Mucosa of descending colon (tissue), 3 donors: ENCODE measurements at regions of chr2 and their contacts with region 1.

Region 1: DNA sequence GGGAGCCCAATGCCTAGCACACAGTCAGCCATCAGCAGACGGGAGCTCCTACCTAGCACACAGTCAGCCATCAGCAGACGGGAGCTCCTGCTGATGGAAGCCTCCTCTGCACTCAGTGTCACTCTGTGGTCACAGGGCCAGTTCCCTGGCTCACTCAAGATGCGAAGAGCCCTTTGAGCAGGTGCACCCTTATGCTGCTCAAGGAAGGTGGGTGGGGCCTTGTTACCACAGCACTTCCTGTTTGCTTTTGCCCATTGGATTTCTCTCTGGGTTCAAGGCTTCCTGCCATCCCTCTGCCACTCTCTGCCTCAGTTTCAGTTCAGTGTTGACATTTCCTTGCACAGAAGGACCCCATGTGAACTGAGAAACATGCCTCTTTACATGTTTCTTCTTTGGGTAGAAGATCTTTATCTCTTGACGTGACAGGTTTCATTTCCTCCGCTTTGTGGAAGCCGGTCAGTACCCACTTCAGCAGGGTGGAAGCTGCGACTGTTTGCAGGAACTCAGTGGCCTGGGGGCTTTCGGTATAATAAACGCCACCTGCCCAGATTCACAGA is 11.6 kb downstream of the TRIB2 start:
- DNase-seq: peak; percentile 28 to 61 (median 34)
- ATAC-seq: peak; percentile 72
- H3K4me3 ChIP-seq: no peak overlapping the region
- H3K4me1 ChIP-seq: peaks cover 14% of the 10 kb centered on the region
- CTCF ChIP-seq: no peak

Region 2: DNA sequence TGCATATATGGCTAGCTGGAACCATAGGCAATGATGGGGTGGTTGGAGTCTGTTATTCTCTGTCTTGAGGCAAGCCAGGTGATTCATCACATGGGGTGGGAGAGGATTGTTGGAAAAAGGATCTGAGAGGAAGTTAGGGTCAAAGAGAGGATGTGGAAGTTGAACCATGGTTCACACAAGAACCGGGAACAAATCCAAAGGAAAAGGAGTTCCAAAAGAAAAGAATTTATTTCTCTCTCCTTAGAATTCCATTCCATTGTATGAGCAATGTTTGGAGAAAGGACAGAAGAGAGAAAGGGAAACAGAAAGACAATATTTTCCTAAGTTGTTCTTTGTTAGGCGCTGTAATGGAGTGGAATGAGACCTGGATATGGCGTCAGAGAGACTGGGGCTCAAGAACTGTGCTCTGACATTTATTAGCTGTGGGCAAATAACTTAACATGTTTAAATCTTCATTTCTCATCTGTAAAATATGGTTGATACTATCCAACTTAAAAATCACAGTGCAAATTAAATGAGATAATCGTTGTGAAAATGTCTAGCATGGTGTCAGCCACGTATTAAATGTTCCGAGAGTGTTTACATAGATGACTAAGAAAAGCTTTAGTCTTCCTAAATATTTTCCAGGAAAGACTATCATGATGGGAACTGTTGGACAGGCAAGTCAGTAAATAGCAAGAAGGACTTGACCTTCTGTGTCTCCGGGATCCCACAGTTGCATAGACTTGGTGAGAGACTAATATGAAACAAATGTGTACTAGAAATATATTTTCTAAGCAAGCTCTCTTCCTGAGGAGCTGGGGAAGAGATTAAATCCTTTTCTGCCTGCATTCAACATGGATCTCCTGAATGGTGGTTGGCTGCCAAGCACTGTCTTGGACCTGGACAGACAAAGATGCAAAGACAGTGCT is 59.8 kb after region 1 on chr2:
- intact Hi-C with region 1: no loop called
- DNase-seq: no peak
- ATAC-seq: no peak
- H3K4me3 ChIP-seq: no peak overlapping the region
- H3K4me1 ChIP-seq: no peaks in the 10 kb centered on the region
- CTCF ChIP-seq: no peak

Region 3: DNA sequence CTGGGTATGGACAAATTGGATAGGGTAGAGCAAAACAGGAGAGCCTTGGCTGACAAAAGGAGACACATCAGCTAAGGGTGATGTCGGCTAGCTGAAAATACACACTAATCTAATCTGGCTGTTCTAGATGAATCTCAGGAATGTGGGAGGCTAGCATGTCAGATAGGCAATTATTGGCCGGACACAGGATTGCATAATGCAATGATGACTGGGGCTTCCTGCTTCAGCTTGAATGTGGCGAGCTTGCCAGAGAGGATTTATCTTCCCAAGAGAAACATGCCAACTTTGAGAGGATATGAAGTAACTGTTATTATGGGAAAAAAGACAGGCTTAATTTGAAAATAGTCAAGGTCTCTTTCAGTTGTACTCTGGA is 90.8 kb after region 1 on chr2:
- intact Hi-C with region 1: no loop called
- DNase-seq: peak in 1 of 3 donors; percentile 53
- ATAC-seq: peak; percentile 68
- H3K4me3 ChIP-seq: no peak overlapping the region
- H3K4me1 ChIP-seq: no peaks in the 10 kb centered on the region
- CTCF ChIP-seq: no peak

Region 4: DNA sequence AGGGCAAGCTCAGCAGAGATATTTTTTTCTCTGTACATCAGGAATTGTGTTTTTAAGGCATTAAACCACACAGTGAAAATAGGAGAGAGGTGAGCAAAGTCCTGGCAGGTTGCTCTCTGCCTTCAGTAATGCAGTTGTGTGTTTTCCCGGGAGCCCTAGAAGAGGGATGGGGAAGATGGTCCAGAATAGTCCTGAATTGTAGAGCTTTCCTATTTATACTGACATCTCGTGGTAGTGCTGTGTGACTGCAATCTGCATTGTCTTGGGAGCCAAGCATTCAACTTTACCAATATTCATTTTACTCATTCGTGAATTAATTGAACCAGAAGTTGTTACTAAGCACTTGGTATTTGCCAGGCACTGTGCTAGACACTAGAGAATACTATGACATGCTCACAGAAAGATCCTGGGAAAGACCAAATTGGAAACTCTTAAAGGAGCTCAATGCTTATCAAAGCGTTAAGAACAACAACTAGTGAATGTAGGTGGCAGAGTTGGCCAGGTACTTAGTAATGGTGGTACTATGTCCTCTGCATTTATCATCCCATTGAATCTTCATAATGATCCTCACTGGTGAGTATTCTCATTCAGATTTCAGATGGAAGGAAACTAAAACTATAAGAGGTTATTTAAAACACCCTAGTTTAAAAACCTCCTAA is 203.0 kb after region 1 on chr2:
- intact Hi-C with region 1: loop called in 1 of 2 experiments (anchors 10 kb)
- DNase-seq: peak in 1 of 3 donors; percentile 9
- ATAC-seq: peak; percentile 63
- H3K4me3 ChIP-seq: no peak overlapping the region
- H3K4me1 ChIP-seq: no peaks in the 10 kb centered on the region
- CTCF ChIP-seq: peak; percentile 63